ENCODE measurements at regions of chr11 and their contacts with region 1.

Region 1: GRCh38 chr11:63945477-63946163 is 6.8 kb downstream of the NAA40 start:
- DNase-seq: peak; percentile 84 to 86 (median 86)
- ATAC-seq: peak; percentile 97
- H3K4me3 ChIP-seq: no peak overlapping the region
- H3K27ac ChIP-seq: peak overlapping the region in 3 of 4 donors; percentile 4 to 46 (median 19)
- H3K4me1 ChIP-seq: peaks cover 11% of the 10 kb centered on the region
- H3K27me3 ChIP-seq: no peaks in the 10 kb centered on the region
- CTCF ChIP-seq: peak; percentile 53 to 95 (median 94)
- POLR2A ChIP-seq: no peak

Region 2: DNA sequence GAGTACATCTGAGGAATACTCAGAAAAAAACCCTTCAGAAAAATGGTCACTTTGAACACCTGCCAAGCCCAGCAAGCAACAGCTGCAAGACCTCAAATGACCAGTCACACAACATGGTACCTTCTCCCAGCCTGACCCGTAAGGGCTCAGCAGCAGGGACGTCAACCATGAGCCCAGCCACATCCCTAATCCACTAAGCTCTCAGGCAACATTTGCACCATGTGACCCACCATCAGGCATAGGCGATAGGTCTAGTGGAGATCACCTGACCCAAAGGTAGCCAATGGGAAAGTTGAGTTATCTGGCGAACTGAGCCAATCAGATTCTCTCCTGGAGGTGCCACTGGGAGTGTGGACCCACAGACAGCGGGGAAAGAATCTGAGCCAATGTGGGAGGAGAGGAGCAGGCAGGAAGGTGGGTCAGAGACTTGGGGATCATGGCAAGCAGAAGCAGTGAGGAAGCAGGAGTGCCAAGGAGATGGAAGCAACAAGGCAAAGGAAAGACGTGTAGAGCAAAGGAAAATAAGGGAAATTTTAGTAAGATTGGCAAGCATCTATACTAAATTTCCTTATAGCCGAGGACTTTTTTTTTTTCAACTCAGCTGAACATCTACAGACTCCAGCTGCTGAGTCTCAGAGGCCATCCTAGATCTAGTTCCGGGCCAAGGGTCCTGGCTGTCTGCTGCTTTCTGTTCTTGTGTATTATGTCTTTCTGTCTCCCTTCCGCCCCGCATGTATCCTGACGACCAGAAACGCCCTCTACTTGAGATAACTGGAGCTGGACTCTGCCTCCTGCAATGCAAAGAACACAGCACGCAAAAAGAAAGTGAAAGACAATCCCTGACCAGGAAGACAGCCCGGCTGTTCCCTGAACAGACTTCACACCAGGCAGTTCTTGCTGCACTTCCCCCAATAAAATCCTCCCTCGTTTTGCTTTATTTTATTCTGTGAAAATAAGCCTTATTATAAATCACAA is 371.5 kb before region 1 on chr11:
- intact Hi-C with region 1: no loop called
- DNase-seq: peak in 2 of 4 donors; percentile 22 to 56
- ATAC-seq: peak; percentile 63
- H3K4me3 ChIP-seq: no peak overlapping the region
- H3K27ac ChIP-seq: peak overlapping the region in 2 of 4 donors; percentile 19 to 40
- H3K4me1 ChIP-seq: no peaks in the 10 kb centered on the region
- H3K27me3 ChIP-seq: no peaks in the 10 kb centered on the region
- CTCF ChIP-seq: no peak
- POLR2A ChIP-seq: no peak

Region 3: DNA sequence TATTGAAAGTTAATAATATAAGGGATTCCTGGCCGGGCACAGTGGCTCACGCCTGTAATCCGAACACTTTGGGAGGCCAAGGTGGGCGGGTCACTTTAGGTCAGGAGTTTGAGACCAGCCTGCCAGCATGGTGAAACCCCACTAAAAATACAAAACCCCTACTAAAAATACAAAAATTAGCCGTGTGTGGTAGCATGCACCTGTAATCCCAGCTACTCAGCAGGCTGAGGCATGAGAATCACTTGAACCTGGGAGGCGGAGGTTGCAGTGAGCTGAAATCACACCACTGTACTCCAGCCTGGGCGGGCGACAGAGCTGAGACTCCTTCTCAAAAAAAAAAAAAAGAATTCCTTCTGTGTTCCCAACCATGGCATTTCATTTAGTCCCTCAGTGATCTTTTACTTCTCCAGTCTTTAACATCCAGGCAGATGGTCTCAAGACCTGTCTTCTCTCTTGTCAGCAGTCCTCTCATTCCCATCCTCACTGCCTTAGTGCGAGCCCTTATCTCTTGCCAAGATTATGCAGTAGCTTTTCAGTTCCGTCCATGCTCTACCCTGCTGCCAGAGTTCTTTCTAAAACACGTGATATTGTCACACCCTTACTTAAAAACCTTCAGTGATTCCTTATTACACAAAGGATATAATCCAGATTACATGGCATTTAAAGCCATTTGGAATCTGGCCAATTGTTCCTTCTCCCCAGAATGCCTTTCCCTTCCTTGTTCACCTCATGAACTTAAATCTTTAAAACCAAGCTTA is 246.5 kb before region 1 on chr11:
- intact Hi-C with region 1: no loop called
- DNase-seq: no peak
- ATAC-seq: peak; percentile 18
- H3K4me3 ChIP-seq: no peak overlapping the region
- H3K27ac ChIP-seq: peak overlapping the region in 2 of 4 donors; percentile 4 to 44
- H3K4me1 ChIP-seq: peaks cover 10% of the 10 kb centered on the region
- H3K27me3 ChIP-seq: no peaks in the 10 kb centered on the region
- CTCF ChIP-seq: no peak
- POLR2A ChIP-seq: no peak

Region 4: GRCh38 chr11:63768237-63769043 is 177.2 kb before region 1 on chr11 and contains the start of gene ZFTA:
- intact Hi-C with region 1: loop called (anchors 10 kb)
- DNase-seq: peak; percentile 63 to 77 (median 70)
- ATAC-seq: peak; percentile 61
- H3K4me3 ChIP-seq: peak within 1 kb of the TSS; percentile 53 to 88
- H3K27ac ChIP-seq: peak within 1 kb of the TSS; percentile 46 to 77 (median 69)
- H3K4me1 ChIP-seq: peaks cover 46% of the 10 kb centered on the region
- H3K27me3 ChIP-seq: no peaks in the 10 kb centered on the region
- CTCF ChIP-seq: peak in 4 of 7 experiments; percentile 78 to 90 (median 82)
- POLR2A ChIP-seq: no peak
- total RNA-seq, gene ZFTA: 13.2 to 23.1 TPM

Region 5: GRCh38 chr11:63829823-63830489 is 115.7 kb before region 1 on chr11:
- intact Hi-C with region 1: loop called (anchors 5 kb)
- DNase-seq: peak in 1 of 4 donors; percentile 30
- ATAC-seq: peak; percentile 24
- H3K4me3 ChIP-seq: no peak overlapping the region
- H3K27ac ChIP-seq: no peak overlapping the region
- H3K4me1 ChIP-seq: no peaks in the 10 kb centered on the region
- H3K27me3 ChIP-seq: no peaks in the 10 kb centered on the region
- CTCF ChIP-seq: peak in 4 of 7 experiments; percentile 17 to 30 (median 24)
- POLR2A ChIP-seq: no peak